PC-3 (cell line): ENCODE measurements at regions of chr6 and their contacts with region 1.

Region 1: DNA sequence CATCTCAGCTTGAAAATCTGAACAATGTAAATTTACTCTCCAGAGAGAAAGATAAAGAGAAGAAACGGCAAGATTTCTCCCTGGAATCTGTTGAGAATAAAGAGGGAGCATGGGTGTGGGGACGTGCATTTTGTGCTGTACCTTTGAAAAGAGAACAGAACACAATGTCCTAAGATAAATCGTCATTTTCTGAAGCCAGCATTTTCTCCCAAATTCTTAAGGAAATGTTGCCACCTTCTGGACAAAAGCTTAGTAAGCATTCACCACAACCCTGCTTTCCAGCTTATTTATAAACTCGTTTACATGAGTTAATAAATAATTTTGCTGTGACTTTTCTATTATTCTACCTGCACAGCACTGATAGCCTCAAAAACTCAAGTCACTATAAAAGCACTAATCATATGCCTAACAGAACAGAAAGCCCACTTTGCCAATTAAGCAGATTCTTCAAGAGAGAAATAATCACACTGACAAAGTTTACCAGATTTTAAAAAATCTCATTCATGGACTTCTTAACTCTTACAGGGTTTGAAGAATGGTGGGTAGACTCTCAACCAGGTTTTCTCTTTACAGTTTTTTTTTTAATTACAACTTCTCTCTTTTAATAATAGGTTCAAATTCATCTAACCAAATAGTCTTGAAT is 155.8 kb downstream of the MBOAT1 start:
- DNase-seq: peak; percentile 81
- ATAC-seq: peak; percentile 37; the same call in 1 of the 2 replicates
- H3K4me3 ChIP-seq: no peak overlapping the region
- H3K27ac ChIP-seq: no peak overlapping the region
- H3K4me1 ChIP-seq: no peaks in the 10 kb centered on the region
- H3K27me3 ChIP-seq: no peaks in the 10 kb centered on the region
- CTCF ChIP-seq: peak; percentile 76

Region 2: DNA sequence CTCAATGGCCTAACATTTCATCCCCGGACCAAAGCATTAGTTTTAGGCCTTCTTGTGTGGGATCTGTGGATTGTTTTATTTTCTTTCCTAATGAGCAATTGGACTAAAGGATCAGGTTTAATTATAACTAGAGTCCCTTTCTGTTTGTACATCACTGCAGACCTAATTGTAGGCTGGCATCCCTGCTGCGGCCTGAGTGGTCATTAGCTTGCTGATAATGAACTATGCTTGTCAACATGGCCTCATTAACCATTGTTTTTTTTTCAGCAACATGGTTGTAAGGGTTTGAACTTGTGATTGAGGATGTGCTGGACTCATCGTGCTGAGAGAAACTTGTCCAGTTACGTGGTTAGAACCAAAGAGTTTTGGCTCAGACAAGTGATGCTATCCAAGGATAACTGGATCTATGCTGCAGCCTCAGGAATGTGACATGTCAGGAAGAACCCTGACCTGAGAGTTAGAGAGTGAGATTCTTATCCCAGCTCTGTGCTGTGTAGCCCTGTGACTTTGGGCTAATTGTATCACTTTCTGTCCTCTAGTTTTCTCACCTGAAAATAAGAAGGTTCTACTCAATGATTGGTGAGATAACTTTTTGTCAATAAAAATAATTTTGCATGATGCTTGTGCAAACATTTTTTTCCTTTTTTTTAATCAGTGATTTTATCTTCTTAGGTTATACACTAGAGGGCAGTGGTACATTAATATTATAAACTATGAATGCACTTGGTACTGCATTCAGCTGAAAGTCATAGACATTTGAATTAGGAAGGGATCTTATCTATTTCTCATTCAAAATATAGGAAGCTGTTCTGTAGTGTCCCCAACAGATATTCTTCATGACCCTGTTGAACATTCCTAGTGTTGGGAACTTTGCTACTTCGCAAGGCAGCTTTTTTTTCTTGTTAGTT is 1528.4 kb before region 1 on chr6:
- CTCF ChIA-PET with region 1: no interaction called
- POLR2A ChIA-PET with region 1: no interaction called
- intact Hi-C with region 1: loop called (anchors 2 kb)
- DNase-seq: peak; percentile 55
- ATAC-seq: peak; percentile 68
- H3K4me3 ChIP-seq: no peak overlapping the region
- H3K27ac ChIP-seq: no peak overlapping the region
- H3K4me1 ChIP-seq: no peaks in the 10 kb centered on the region
- H3K27me3 ChIP-seq: peaks cover 18% of the 10 kb centered on the region
- CTCF ChIP-seq: peak; percentile 72

Region 3: GRCh38 chr6:18595774-18596530 is 1460.5 kb before region 1 on chr6:
- CTCF ChIA-PET with region 1: no interaction called
- POLR2A ChIA-PET with region 1: no interaction called
- intact Hi-C with region 1: loop called (anchors 1 kb)
- DNase-seq: peak; percentile 85
- ATAC-seq: peak; percentile 86
- H3K4me3 ChIP-seq: no peak overlapping the region
- H3K27ac ChIP-seq: no peak overlapping the region
- H3K4me1 ChIP-seq: no peaks in the 10 kb centered on the region
- H3K27me3 ChIP-seq: peaks cover 35% of the 10 kb centered on the region
- CTCF ChIP-seq: peak; percentile 96

Region 4: GRCh38 chr6:18746727-18747126 is 1309.7 kb before region 1 on chr6:
- CTCF ChIA-PET with region 1: interaction called, 4 read pairs
- POLR2A ChIA-PET with region 1: no interaction called
- intact Hi-C with region 1: loop called (anchors 2 kb)
- DNase-seq: no peak
- ATAC-seq: no peak
- H3K4me3 ChIP-seq: no peak overlapping the region
- H3K27ac ChIP-seq: no peak overlapping the region
- H3K4me1 ChIP-seq: peaks cover 10% of the 10 kb centered on the region
- H3K27me3 ChIP-seq: peaks cover 33% of the 10 kb centered on the region
- CTCF ChIP-seq: no peak

Region 5: GRCh38 chr6:18997375-18997826 is 1059.1 kb before region 1 on chr6:
- CTCF ChIA-PET with region 1: interaction called, 7 read pairs
- POLR2A ChIA-PET with region 1: no interaction called
- intact Hi-C with region 1: loop called (anchors 1 kb)
- DNase-seq: peak; percentile 79
- ATAC-seq: peak; percentile 97
- H3K4me3 ChIP-seq: no peak overlapping the region
- H3K27ac ChIP-seq: no peak overlapping the region
- H3K4me1 ChIP-seq: no peaks in the 10 kb centered on the region
- H3K27me3 ChIP-seq: peaks cover 4% of the 10 kb centered on the region; the same call in 1 of the 2 replicates
- CTCF ChIP-seq: peak; percentile 86

Region 6: GRCh38 chr6:19024737-19025136 is 1031.7 kb before region 1 on chr6:
- CTCF ChIA-PET with region 1: no interaction called
- POLR2A ChIA-PET with region 1: no interaction called
- intact Hi-C with region 1: loop called (anchors 1 kb)
- DNase-seq: peak; percentile 81
- ATAC-seq: peak; percentile 91
- H3K4me3 ChIP-seq: no peak overlapping the region
- H3K27ac ChIP-seq: no peak overlapping the region
- H3K4me1 ChIP-seq: peaks cover 9% of the 10 kb centered on the region; the same call in 1 of the 2 replicates
- H3K27me3 ChIP-seq: no peaks in the 10 kb centered on the region
- CTCF ChIP-seq: peak; percentile 85

Region 7: DNA sequence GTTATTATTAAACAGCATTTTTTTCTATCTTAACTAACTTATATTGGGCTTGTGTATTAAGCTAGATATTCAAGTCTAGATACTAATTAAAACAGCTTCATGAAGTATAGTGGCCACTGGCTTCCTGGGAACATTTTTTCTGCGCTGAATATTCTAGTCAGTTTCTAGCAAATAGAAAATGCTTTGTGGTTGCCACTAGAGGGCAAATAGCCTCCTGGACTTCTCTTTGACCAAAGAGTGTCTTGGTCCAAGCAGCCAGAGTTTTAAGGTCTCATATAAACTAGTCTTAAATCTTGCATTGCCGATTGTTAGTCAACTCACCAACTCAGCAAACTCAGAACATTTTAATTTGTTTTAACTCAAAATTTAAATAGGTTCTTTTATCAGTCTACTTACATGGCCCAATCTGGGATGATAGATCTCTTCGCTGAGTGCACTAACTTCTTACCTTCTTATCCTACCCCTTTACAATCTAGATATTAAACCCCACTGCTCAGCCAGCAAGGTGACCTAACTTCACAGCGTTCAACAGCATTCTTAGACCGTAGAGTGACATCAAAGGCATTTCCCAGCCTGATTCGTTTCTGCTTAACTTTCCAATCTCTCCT is 243.9 kb before region 1 on chr6:
- CTCF ChIA-PET with region 1: no interaction called
- POLR2A ChIA-PET with region 1: no interaction called
- intact Hi-C with region 1: loop called (anchors 1 kb)
- DNase-seq: peak; percentile 60
- ATAC-seq: peak; percentile 70
- H3K4me3 ChIP-seq: no peak overlapping the region
- H3K27ac ChIP-seq: no peak overlapping the region
- H3K4me1 ChIP-seq: no peaks in the 10 kb centered on the region
- H3K27me3 ChIP-seq: no peaks in the 10 kb centered on the region
- CTCF ChIP-seq: peak; percentile 81

Region 8: DNA sequence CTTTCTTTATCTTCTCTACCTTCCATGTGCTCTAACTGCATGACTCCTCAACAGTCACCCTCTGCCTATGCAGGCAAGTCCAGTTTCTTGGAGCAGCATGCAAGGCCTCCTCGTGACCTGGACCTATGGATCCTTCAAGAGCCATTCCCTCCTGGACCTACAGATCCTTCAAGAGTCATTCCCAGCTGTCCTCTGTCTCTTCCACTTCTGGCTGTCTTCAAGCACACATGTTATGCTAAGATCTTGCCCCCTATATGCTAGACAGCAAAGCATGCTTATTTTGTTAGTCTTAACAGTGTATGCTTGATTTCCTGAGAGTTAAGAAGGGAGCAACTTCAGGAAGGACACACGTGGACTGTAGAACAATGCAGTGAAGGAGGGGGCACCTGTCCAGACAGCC is 211.8 kb before region 1 on chr6:
- CTCF ChIA-PET with region 1: no interaction called
- POLR2A ChIA-PET with region 1: no interaction called
- intact Hi-C with region 1: no loop called
- DNase-seq: no peak
- ATAC-seq: no peak
- H3K4me3 ChIP-seq: no peak overlapping the region
- H3K27ac ChIP-seq: no peak overlapping the region
- H3K4me1 ChIP-seq: no peaks in the 10 kb centered on the region
- H3K27me3 ChIP-seq: no peaks in the 10 kb centered on the region
- CTCF ChIP-seq: no peak

Region 9: DNA sequence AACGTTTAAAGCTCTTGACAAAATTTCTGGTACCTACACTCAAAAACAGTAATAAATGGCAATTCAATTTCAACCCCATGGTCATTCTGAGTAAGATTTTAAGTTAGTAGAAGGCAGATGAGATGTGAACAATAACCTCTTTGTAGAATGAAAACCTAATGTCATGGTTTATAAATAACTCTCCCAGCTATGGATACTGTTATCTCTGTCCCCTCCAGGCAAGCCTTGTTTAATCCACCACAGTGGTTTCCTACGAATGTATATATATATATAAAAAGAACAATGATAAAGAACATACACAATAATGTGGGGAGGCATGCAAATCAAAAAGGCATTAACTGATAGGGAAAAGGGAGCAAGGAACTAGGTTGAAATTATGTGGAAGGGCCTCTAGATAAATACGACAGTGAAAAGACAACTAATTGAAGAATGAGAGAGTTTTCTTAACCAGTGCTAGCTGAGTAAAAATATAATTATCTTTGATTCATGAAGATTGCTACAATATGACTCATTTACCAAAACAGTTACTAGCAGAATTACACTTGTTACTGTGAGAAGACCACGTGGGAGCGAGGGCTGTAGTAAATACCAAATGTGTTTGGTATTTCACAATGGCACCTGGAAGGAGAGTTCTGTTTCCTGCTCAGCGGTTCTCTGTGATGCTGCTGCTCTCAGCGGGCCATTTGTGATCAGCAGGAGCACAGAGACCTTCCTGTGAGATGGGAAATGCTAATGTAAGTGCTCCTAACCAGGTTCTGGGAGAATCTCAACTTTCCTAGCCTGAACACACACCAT is 17.9 kb before region 1 on chr6:
- CTCF ChIA-PET with region 1: no interaction called
- POLR2A ChIA-PET with region 1: no interaction called
- intact Hi-C with region 1: no loop called
- DNase-seq: no peak
- ATAC-seq: no peak
- H3K4me3 ChIP-seq: no peak overlapping the region
- H3K27ac ChIP-seq: no peak overlapping the region
- H3K4me1 ChIP-seq: no peaks in the 10 kb centered on the region
- H3K27me3 ChIP-seq: peaks cover 24% of the 10 kb centered on the region; the same call in 1 of the 2 replicates
- CTCF ChIP-seq: no peak